ENCODE measurements at regions of chr10 and their contacts with region 1.

Region 1: DNA sequence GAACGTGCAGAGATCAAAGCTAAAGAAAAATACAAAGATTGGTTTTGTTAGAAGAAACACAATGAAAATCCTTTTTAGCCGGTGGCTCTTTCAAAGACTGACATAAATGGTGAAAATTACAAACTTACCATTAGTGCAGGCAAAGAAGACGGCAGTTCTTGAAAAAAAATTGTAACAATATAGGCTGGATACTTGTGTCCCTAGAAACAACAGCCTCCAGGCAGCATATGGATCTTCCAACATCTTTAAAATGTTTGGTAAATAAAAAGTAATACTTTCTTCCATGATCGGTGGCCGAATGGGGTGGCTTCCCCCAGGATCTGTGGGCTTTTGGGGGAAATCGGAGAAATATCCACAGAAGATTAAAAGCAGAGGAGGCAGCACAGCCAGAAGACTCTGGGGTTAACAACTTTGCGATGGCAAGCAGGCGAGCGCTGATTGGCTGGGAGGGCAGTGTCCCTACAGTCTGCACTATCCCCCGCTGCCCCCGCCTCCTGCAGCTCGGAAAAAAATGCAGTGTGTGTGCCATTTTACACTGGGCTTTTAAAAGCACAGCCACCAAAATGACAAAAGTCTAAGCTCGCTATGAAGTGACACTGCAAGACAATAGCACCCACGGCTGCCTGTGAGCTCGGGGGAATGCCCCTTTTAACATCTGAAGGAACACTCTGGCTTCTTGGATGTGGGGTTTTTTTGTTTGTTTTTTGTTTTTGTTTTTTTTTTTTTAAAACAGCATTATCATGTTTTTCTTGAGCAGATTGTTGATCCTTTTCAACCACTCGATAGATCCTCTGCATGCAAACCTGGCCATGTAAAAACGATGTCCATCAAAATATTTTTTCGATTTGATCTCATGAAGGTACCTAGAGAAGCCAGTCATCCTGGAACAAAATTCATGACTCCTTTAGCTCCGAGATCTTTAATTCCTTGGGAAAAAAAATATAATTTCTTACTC is 31.7 kb upstream of the EPC1 start:
- DNase-seq: peak; percentile 97

Region 2: GRCh38 chr10:32055813-32056600 is 322.6 kb before region 1 on chr10 and contains the start of gene KIF5B:
- intact Hi-C with region 1: loop called (anchors 10 kb)
- DNase-seq: peak; percentile 95
- total RNA-seq, gene KIF5B: 181 TPM

Region 3: GRCh38 chr10:32357056-32357735 is 21.4 kb before region 1 on chr10:
- intact Hi-C with region 1: no loop called
- DNase-seq: no peak

Region 4: DNA sequence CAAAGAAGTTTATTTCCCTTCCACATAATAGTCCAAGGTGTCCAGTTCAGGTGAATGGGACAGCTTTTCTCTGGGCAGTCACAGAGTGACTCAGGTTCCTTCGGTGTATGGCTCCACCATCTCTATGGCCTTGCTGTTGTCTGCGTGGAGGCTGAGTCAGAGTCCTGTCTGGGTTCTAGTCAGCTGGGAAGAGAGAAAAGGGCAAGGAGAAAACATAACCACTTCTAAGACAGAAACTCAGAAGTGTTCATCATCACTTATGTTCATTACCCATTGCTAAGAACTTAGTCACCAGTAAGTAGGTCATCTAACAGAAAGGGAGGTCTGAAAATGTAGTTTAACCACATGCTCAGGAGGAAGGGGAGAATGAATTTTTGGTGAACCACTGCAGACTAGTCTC is 34.9 kb after region 1 on chr10:
- intact Hi-C with region 1: loop called (anchors 2 kb)
- DNase-seq: no peak

Region 5: GRCh38 chr10:32958085-32959005 is 579.7 kb after region 1 on chr10 and contains the start of gene ITGB1:
- intact Hi-C with region 1: loop called (anchors 5 kb)
- DNase-seq: peak; percentile 98
- total RNA-seq, gene ITGB1: 715 TPM